Activated B cell treated with CpG ODN at 0.5 μM for 24 hours (primary cell): ENCODE measurements at regions of chr17 and their contacts with region 1.

Region 1: DNA sequence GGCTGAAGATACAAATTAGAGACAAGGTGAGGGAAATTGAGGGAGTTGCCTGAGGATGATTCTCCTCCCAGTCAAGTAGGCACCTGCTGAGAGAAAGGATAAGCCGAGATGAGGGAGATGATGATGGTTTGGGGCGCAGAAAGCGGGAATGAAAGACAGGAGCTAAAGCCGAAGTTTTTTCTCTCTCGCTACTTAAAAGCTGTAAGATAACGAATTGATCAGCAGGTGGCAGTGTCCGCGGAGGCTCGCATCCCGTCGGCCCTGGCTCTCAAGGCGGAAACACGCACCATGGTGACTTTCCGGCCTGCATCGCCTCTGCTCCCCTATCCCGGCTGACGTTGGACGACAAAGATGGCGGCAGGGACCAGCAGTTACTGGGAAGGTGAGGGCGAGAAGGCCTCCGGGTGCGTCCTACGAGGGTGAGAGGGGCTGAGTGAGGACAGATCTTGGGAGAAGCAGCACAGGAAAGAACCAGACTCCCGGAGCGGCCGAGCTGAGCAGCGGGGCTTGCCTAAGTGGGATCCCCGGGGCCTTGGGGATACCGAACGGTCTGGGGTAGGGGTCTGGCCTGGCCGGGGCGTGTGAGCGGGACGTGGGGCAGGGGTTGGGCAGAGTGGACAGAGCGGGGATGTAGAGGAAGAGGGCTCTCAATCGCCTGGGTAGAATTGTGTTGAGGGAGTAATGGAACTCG is at the start of gene GOSR1:
- DNase-seq: peak; percentile 79
- ATAC-seq: peak; percentile 99
- H3K4me3 Mint-ChIP-seq: peak within 1 kb of the TSS; percentile 97
- H3K27ac Mint-ChIP-seq: peak within 1 kb of the TSS; percentile 97
- H3K4me1 Mint-ChIP-seq: peaks cover 30% of the 10 kb centered on the region
- H3K27me3 Mint-ChIP-seq: no peaks in the 10 kb centered on the region
- CTCF ChIP-seq: no peak
- total RNA-seq, gene GOSR1: 59.9 and 60.7 TPM in 2 replicates

Region 2: GRCh38 chr17:30291543-30292285 is 185.5 kb before region 1 on chr17 and contains the start of gene BLMH:
- CTCF ChIA-PET with region 1: no interaction called
- POLR2A ChIA-PET with region 1: no interaction called
- intact Hi-C with region 1: loop called (anchors 1 kb)
- DNase-seq: peak; percentile 74
- ATAC-seq: peak; percentile 97
- H3K4me3 Mint-ChIP-seq: peak within 1 kb of the TSS; percentile 91
- H3K27ac Mint-ChIP-seq: peak within 1 kb of the TSS; percentile 51
- H3K4me1 Mint-ChIP-seq: peaks cover 12% of the 10 kb centered on the region
- H3K27me3 Mint-ChIP-seq: no peaks in the 10 kb centered on the region
- CTCF ChIP-seq: no peak
- total RNA-seq, gene BLMH: 38.0 and 40.3 TPM in 2 replicates

Region 3: DNA sequence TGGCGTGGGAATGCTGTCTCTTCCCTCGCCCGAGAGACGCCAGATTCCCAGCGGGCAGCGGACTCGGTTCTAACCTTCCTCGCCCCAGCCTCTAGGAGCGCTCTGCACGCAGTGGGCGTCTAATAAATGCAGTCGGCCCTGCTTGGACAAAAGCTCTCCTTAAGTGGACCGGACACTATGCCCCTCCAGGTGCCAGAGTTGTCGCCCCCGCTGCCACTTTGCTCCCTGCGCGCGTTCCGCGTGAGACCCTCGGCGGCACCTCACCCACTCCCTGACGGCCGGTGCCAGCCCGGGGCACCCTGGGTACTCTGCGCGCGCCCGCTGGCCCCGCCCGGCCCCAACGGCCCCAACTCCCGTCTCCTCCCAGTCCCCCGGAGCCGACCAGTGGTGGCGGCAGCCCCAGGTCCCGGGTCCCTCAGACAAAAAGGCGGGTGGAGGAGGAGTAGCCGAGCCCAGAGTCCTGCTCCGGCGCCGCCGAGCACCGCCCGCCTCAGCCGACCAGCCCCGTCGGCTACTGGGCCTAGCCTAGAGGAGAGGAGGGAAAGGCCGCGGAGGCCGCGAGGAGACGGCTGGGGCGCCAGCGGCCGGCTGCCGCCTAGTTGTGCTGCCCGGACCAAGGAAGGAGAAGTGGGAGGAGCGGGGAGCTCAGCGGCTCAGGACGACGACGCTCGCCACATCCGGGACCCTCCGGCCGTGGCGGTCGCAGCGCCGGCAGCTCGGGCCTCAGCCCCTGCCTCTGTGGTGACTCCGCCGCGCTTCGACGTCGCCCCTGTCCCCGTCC is 123.0 kb after region 1 on chr17:
- CTCF ChIA-PET with region 1: interaction called, 3 read pairs
- POLR2A ChIA-PET with region 1: interaction called, 18 read pairs
- intact Hi-C with region 1: loop called (anchors 1 kb)
- DNase-seq: peak; percentile 80
- ATAC-seq: peak; percentile 90
- H3K4me3 Mint-ChIP-seq: peak overlapping the region; percentile 98
- H3K27ac Mint-ChIP-seq: peak overlapping the region; percentile 76
- H3K4me1 Mint-ChIP-seq: peaks cover 29% of the 10 kb centered on the region
- H3K27me3 Mint-ChIP-seq: no peaks in the 10 kb centered on the region
- CTCF ChIP-seq: no peak

Region 4: GRCh38 chr17:30808785-30809286 is 331.6 kb after region 1 on chr17:
- CTCF ChIA-PET with region 1: no interaction called
- POLR2A ChIA-PET with region 1: no interaction called
- intact Hi-C with region 1: loop called (anchors 5 kb)
- DNase-seq: no peak
- ATAC-seq: peak; percentile 94
- H3K4me3 Mint-ChIP-seq: peak overlapping the region; percentile 81
- H3K27ac Mint-ChIP-seq: peak overlapping the region; percentile 95
- H3K4me1 Mint-ChIP-seq: peaks cover 70% of the 10 kb centered on the region
- H3K27me3 Mint-ChIP-seq: no peaks in the 10 kb centered on the region
- CTCF ChIP-seq: no peak

Region 5: DNA sequence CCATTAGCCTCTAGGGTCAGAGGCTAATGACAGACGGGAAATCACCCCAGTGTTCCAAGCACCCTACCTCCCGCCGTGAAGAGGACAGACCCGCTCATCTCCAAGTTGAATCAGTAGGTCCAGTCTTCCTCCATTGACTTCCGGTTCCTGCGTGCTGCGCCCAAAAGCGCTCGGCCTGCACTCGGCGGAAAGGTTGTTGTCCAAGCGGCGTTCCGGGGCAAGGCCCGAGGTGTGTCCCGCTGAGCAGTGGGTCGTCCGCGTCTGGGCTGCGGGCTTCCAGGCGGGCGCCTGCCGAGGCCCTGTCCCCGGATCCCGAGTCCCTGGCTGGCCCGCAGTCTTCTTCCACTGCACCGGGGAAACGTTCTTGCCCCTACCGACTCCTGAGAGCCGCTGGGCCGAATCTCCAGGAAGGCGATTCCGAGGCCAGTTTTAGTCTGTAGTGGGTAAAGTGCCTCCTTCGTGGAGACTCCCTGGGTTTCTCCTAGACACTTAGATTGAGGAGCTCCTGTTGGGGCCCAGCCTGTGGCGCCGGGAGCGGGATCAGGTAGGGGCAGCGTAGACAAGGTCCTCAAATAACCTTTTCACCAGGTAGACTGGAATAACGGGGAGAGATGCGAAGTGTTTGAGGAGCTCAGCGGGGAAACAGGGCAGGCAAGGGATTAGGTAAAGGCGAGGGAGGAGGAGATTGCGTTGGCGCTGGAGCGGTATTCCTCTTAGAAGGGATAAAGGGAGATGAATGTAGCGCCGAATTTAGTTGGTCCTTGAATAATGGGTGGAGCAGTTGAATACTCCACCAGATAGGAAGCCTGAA is 429.1 kb after region 1 on chr17 and contains the start of gene TEFM:
- CTCF ChIA-PET with region 1: no interaction called
- POLR2A ChIA-PET with region 1: no interaction called
- intact Hi-C with region 1: loop called (anchors 5 kb)
- DNase-seq: peak; percentile 90
- ATAC-seq: peak; percentile 98
- H3K4me3 Mint-ChIP-seq: peak within 1 kb of the TSS; percentile 95
- H3K27ac Mint-ChIP-seq: peak within 1 kb of the TSS; percentile 93
- H3K4me1 Mint-ChIP-seq: peaks cover 42% of the 10 kb centered on the region
- H3K27me3 Mint-ChIP-seq: no peaks in the 10 kb centered on the region
- CTCF ChIP-seq: no peak
- total RNA-seq, gene TEFM: 23.0 and 25.2 TPM in 2 replicates